ENCODE measurements at regions of chr3 and their contacts with region 1.

Region 1: DNA sequence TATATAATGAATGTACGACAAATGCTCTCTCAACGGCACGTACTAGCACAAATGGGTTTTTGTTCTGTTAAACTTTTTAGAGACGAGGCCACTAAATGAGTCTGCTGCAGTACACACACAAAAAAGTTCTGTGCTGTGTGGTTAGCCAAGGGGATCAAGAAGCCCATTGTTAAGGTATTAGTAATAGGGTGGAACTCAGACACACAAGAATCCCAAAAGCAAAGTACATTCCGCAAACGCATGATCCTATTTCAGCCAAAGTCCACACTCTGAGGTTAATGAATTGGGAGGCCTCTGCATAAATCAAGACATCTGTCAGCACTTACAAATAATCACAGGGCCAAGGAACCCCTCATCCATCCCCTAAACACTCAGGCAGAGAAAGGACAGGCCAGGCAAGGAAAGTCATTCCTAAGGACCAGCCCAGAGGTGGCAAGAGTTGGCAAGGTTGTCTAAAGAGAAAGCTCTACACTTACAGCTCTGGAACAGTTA is 12.1 kb downstream of the OSBPL10 start:
- DNase-seq: no peak
- ATAC-seq: peak in 6 of 8 donors; percentile 52 to 84 (median 76)
- H3K4me3 ChIP-seq: no peak overlapping the region
- H3K27ac ChIP-seq: peak overlapping the region in 8 of 10 donors; percentile 15 to 63 (median 44)
- H3K4me1 ChIP-seq: peaks cover 0 to 28% (median 17%) of the 10 kb centered on the region in 9 donors
- H3K27me3 ChIP-seq: no peaks in the 10 kb centered on the region
- CTCF ChIP-seq: no peak

Region 2: GRCh38 chr3:31531992-31532586 is 436.9 kb before region 1 on chr3:
- intact Hi-C with region 1: loop called in 1 of 10 experiments (anchors 10 kb)
- DNase-seq: peak; percentile 99
- ATAC-seq: peak; percentile 95 to 99 (median 98)
- H3K4me3 ChIP-seq: peak overlapping the region; percentile 78 to 97 (median 88)
- H3K27ac ChIP-seq: peak overlapping the region; percentile 92 to 97 (median 96)
- H3K4me1 ChIP-seq: peaks cover 0 to 44% (median 35%) of the 10 kb centered on the region in 9 donors
- H3K27me3 ChIP-seq: no peaks in the 10 kb centered on the region
- CTCF ChIP-seq: peak in 3 of 9 donors; percentile 11 to 36 (median 34)

Region 3: GRCh38 chr3:32004113-32004765 is 35.3 kb after region 1 on chr3:
- intact Hi-C with region 1: no loop called
- DNase-seq: no peak
- ATAC-seq: no peak
- H3K4me3 ChIP-seq: no peak overlapping the region
- H3K27ac ChIP-seq: no peak overlapping the region
- H3K4me1 ChIP-seq: no peaks in the 10 kb centered on the region
- H3K27me3 ChIP-seq: peaks cover 0 to 10% (median 0%) of the 10 kb centered on the region in 7 donors
- CTCF ChIP-seq: no peak